ENCODE measurements at regions of chr9 and their contacts with region 1.

Region 1: GRCh38 chr9:31824860-31825259 is 559.6 kb upstream of the ACO1 start:
- DNase-seq: no peak
- ATAC-seq: no peak
- H3K4me3 ChIP-seq: no peak overlapping the region
- H3K27ac ChIP-seq: no peak overlapping the region
- H3K4me1 ChIP-seq: no peaks in the 10 kb centered on the region
- H3K27me3 ChIP-seq: no peaks in the 10 kb centered on the region
- CTCF ChIP-seq: no peak
- EP300 ChIP-seq: no peak
- POLR2A ChIP-seq: no peak
- RAD21 ChIP-seq: no peak

Region 2: DNA sequence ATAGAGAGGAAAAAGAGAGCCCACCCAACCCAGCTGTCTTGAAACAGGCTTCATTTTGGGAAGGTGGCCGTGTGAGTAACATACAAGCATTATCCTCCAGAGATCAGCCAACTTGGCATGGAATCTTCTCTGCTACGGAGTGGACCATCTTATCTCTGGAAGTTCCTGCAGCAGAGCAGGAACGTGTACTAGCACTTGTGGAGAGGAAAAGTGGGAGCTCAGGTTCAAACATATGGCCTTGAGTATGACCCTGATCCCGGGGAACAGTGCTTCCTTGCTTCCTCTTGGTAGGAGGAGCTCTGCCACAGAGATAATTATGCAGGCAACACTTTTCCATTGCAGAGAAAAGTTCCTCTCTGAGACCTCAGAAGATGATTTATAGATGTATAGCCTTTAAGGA is 69.1 kb after region 1 on chr9:
- CTCF ChIA-PET with region 1: no interaction called
- POLR2A ChIA-PET with region 1: no interaction called
- RAD21 ChIA-PET with region 1: no interaction called
- SMC1A ChIA-PET with region 1: no interaction called
- in situ Hi-C with region 1: no loop called
- intact Hi-C with region 1: loop called (anchors 10 kb)
- DNase-seq: no peak
- ATAC-seq: no peak
- H3K4me3 ChIP-seq: no peak overlapping the region
- H3K27ac ChIP-seq: no peak overlapping the region
- H3K4me1 ChIP-seq: no peaks in the 10 kb centered on the region
- H3K27me3 ChIP-seq: no peaks in the 10 kb centered on the region
- CTCF ChIP-seq: no peak
- EP300 ChIP-seq: no peak
- POLR2A ChIP-seq: no peak
- RAD21 ChIP-seq: no peak

Region 3: DNA sequence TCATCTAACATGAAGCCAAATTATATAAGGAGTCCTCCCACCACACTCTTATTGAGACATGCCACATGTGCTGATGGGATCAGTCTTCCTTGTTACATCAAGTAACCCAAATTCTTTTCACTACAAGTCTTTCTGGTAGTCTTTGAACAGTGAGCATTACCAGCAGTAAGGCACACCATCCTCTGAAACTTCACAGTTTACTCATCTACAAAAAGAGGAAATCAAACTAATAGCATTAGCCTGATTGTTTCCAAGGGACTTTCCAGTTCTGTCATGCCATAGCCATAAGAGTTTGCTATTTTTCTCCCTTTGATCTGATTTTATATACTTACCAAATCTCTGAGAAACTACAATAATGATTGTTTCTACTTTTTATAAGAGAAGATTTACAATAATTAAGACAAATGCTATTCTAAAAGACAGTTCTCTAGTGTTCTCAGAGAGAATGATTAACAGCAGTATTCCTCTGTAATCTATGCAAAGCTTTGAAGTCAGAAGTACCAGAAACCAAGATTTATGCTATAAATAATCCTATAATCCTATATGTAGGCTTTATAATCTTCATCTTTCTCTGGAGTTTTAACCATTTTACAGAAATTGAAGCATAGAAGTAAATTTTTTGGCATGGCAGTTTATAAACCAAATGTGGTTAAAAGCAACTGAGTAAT is 393.4 kb after region 1 on chr9:
- CTCF ChIA-PET with region 1: no interaction called
- POLR2A ChIA-PET with region 1: no interaction called
- RAD21 ChIA-PET with region 1: no interaction called
- SMC1A ChIA-PET with region 1: no interaction called
- in situ Hi-C with region 1: no loop called
- intact Hi-C with region 1: no loop called
- DNase-seq: peak; percentile 50
- ATAC-seq: peak; percentile 99
- H3K4me3 ChIP-seq: no peak overlapping the region
- H3K27ac ChIP-seq: 0 out of 2 replicates have a peak overlapping the region, but pooled peaks have one; percentile 18
- H3K4me1 ChIP-seq: 0 out of 2 replicates have a peak, but pooled peaks cover 5% of the 10 kb centered on the region
- H3K27me3 ChIP-seq: no peaks in the 10 kb centered on the region
- CTCF ChIP-seq: no peak
- EP300 ChIP-seq: peak in 1 of 2 experiments; percentile 72; a peak in 1 of 4 replicates
- POLR2A ChIP-seq: no peak
- RAD21 ChIP-seq: no peak

Measured in GM12878 (cell line).